Vagina (tissue), 2 donors: ENCODE measurements at regions of chr15 and their contacts with region 1.

Region 1: DNA sequence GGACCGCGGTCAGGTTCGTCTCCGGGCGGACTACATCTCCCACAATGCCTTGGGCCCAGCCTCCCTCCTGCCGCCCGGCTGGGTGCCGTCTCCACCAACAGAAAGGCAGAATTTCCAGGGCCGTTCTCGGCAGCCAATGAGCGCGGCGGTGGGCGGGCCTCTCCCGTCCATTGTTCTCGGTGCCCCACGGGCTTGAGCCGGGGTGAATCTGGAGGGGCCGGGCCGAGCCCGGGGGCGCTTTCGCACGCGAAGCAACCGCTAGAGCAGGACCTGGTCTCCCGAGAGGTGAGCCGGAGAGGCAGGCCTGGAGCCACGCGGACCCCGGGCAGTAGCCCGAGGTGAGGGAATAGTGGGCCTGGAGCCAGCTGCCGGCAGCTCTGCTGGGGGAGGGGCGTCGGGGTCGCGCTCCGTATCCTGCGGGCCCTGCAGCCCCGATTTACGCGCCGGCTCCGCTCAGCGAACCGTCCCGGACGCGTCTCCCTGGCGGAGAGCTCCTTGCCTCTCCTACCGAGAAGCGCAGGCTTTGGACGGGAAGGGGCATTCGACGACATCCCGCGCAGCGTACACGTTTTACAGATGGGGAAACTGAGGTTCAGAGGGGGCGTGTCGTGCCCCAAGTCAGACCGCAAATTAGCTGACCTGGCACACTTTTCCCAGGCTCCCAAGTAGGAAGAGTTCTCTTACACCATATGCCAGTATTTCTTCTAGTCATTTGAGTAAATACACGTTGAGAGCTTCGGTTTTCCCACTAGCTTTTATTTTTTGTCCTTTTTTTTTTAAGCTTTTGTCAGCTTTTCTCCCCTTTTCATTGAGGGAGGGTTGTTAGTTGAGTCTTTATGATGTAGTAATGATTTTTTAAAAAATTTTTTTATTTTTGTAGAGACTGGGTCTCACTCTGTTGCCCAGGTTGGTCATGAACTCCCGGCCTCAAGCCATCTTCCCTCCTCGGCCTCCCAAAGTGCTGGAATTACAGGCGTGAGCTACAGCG is at the start of gene ZSCAN2:
- DNase-seq: peak in 1 of 2 donors; percentile 95
- H3K4me3 ChIP-seq: peak within 1 kb of the TSS; percentile 77 to 93
- H3K27ac ChIP-seq: peak within 1 kb of the TSS; percentile 70
- H3K4me1 ChIP-seq: peaks cover 19% of the 10 kb centered on the region
- H3K27me3 ChIP-seq: no peaks in the 10 kb centered on the region
- CTCF ChIP-seq: no peak
- POLR2A ChIP-seq: no peak
- total RNA-seq, gene ZSCAN2: 7.9 TPM

Region 2: DNA sequence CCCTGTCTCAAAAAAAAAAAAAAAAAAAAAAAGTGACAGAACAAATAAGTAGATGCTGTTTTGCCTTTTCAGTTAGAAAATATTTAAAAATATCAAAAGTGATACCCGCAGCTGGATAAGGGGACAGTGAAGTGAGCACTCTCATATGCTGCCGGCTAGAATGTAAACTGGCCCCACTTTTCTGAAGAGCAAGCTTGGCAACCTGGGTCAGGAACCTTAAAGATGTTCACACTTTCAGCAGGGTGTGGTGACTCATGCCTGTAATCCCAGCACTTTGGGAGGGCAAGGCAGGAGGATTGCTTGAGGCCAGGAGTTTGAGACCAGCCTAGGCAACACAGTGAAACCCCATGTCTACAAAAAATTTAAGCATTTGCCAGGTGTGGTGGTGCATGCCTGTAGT is 1812.6 kb before region 1 on chr15:
- intact Hi-C with region 1: no loop called
- DNase-seq: no peak
- H3K4me3 ChIP-seq: no peak overlapping the region
- H3K27ac ChIP-seq: no peak overlapping the region
- H3K4me1 ChIP-seq: no peaks in the 10 kb centered on the region
- H3K27me3 ChIP-seq: no peaks in the 10 kb centered on the region
- CTCF ChIP-seq: no peak
- POLR2A ChIP-seq: no peak

Region 3: DNA sequence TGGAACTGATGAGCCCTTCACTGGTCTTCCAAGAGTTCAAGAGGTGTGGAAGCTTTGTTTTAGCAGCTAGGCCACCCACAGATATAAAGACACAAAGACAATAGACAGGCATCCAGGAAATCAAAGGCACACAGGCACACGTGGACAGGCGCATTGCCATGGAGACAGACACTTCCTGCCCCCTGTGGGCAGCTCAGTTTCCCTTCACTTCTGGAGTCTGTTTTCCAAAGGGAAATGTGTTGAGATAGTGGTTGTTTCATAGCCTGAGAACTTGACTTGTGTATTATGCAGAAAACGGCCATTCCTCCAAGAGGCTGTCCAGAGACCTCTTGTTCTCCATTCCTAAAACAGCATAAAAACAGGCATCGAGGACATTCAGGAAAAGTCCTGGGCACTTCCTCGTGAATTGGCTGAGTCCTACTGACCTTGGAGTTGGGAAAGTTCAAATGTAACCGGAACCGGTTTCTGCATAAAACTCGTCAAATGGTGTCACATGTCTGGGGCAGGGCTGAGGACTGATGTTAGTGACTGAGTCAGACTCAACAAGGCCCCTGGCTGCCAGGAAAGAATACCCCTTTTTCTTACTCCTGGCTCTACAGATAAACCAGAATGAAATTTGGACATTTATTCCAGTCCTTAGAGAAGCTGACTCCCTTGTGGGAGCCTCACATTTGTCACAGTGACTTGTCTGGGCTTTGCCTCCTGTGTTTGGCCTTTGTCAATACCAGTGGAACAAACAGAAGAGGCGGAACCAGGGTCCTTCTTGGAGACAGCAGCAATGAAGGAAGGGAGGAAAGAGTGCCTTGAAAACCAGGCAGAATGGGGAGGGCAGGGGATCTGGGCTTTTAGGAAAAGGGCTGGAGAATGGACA is 217.4 kb after region 1 on chr15:
- intact Hi-C with region 1: loop called (anchors 10 kb)
- DNase-seq: no peak
- H3K4me3 ChIP-seq: no peak overlapping the region
- H3K27ac ChIP-seq: peak overlapping the region; percentile 74
- H3K4me1 ChIP-seq: peaks cover 53% of the 10 kb centered on the region
- H3K27me3 ChIP-seq: no peaks in the 10 kb centered on the region
- CTCF ChIP-seq: no peak
- POLR2A ChIP-seq: no peak

Region 4: GRCh38 chr15:84929744-84930371 is 328.7 kb after region 1 on chr15:
- intact Hi-C with region 1: loop called (anchors 5 kb)
- DNase-seq: no peak
- H3K4me3 ChIP-seq: no peak overlapping the region
- H3K27ac ChIP-seq: no peak overlapping the region
- H3K4me1 ChIP-seq: peaks cover 13% of the 10 kb centered on the region
- H3K27me3 ChIP-seq: no peaks in the 10 kb centered on the region
- CTCF ChIP-seq: no peak
- POLR2A ChIP-seq: no peak

Region 5: GRCh38 chr15:85899927-85900326 is 1298.8 kb after region 1 on chr15:
- intact Hi-C with region 1: no loop called
- DNase-seq: no peak
- H3K4me3 ChIP-seq: no peak overlapping the region
- H3K27ac ChIP-seq: no peak overlapping the region
- H3K4me1 ChIP-seq: peaks cover 7% of the 10 kb centered on the region
- H3K27me3 ChIP-seq: no peaks in the 10 kb centered on the region
- CTCF ChIP-seq: no peak
- POLR2A ChIP-seq: no peak